ENCODE measurements at regions of chr15 and their contacts with region 1.

Region 1: DNA sequence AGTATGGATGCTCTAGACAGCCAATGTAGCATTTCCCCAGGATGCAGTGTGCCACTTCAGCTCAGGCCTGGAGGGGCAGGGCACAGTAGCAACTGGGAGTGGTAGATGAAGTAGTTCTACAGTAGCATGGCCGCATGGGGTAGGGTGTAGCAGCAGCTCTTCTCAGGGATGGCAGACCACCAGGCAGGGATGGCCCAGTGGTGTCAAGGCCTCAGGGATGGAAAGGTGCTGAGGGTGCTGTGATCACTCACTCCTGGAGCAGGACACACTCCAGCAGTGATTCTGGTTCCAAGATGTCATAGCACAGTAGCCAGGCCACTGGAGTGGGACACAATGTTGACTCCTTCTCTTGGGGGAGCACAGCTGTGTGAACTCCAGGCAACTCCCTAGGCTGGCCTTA is 210.9 kb upstream of the LYSMD4 start:
- DNase-seq: no peak
- H3K4me3 ChIP-seq: no peak overlapping the region
- H3K4me3 Mint-ChIP-seq: no peak overlapping the region
- H3K27ac ChIP-seq: no peak overlapping the region
- H3K27ac Mint-ChIP-seq: no peak overlapping the region
- H3K4me1 ChIP-seq: no peaks in the 10 kb centered on the region
- H3K4me1 Mint-ChIP-seq: no peaks in the 10 kb centered on the region
- H3K27me3 ChIP-seq: no peaks in the 10 kb centered on the region
- H3K27me3 Mint-ChIP-seq: peaks cover 0 to 1% (median 0%) of the 10 kb centered on the region in 3 donors
- CTCF ChIP-seq: no peak

Region 2: GRCh38 chr15:99963096-99963825 is 19.1 kb after region 1 on chr15:
- intact Hi-C with region 1: loop called in 1 of 2 experiments (anchors 2 kb)
- DNase-seq: no peak
- H3K4me3 ChIP-seq: no peak overlapping the region
- H3K4me3 Mint-ChIP-seq: no peak overlapping the region
- H3K27ac ChIP-seq: no peak overlapping the region
- H3K27ac Mint-ChIP-seq: no peak overlapping the region
- H3K4me1 ChIP-seq: no peaks in the 10 kb centered on the region
- H3K4me1 Mint-ChIP-seq: no peaks in the 10 kb centered on the region
- H3K27me3 ChIP-seq: no peaks in the 10 kb centered on the region
- H3K27me3 Mint-ChIP-seq: peaks cover 0 to 5% (median 4%) of the 10 kb centered on the region in 3 donors
- CTCF ChIP-seq: no peak

Region 3: DNA sequence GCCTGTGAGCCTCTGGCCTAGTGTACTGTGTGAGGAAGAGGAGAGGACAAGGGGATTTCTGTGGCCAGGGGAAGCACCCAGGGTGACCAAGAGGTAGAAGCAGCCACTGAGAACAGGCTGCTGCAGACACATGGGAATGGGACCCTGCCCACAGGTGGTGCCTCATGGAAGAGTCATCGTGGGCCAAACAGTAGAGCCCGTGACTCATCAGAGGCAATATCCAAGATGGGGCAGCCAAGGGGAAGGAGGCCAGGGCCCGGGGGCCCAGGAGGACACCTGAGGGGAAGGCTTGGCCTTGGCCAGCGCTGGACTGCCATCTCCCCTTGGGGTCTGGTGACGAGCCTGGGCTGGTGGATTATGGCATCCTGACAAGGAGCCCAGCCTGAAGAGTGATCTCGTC is 64.1 kb after region 1 on chr15:
- intact Hi-C with region 1: loop called in 1 of 2 experiments (anchors 10 kb)
- DNase-seq: no peak
- H3K4me3 ChIP-seq: no peak overlapping the region
- H3K4me3 Mint-ChIP-seq: no peak overlapping the region
- H3K27ac ChIP-seq: no peak overlapping the region
- H3K27ac Mint-ChIP-seq: no peak overlapping the region
- H3K4me1 ChIP-seq: no peaks in the 10 kb centered on the region
- H3K4me1 Mint-ChIP-seq: no peaks in the 10 kb centered on the region
- H3K27me3 ChIP-seq: no peaks in the 10 kb centered on the region
- H3K27me3 Mint-ChIP-seq: peaks cover 0 to 2% (median 0%) of the 10 kb centered on the region in 3 donors
- CTCF ChIP-seq: no peak

Region 4: DNA sequence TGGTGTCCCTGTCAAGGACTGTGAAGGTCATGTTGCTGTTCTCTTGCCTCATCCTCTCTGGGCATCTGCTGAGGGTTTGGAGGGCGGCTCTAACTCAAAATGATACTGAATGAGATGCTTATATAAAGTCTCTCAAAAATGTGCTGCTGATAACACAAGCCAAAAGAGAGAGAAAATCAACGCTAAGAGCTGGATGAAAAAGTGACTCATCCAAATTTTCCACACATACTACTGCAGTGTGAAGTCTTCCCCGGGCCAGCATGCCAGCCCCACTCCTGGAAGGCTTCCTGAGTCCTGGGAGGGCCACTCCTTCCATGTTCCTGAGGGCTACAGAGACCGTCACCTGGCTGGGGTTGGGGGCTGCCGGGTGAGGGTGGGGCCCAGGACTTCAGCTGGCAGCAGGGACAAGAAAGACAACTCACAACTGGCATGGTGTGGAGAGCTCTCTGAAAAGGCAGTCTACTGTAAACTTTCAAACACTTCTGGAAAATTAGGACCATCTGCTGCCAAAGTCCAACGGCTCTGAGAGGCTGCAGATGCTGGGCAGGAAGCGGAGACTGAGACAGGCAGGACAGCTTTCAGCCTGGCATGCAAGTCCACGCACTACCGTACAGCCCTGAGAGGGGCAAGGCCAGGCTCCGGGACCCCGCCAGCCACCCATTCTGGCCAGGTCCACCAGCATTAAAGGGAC is 197.3 kb after region 1 on chr15:
- intact Hi-C with region 1: no loop called
- DNase-seq: no peak
- H3K4me3 ChIP-seq: no peak overlapping the region
- H3K4me3 Mint-ChIP-seq: no peak overlapping the region
- H3K27ac ChIP-seq: no peak overlapping the region
- H3K27ac Mint-ChIP-seq: no peak overlapping the region
- H3K4me1 ChIP-seq: no peaks in the 10 kb centered on the region
- H3K4me1 Mint-ChIP-seq: peaks cover 2% of the 10 kb centered on the region
- H3K27me3 ChIP-seq: no peaks in the 10 kb centered on the region
- H3K27me3 Mint-ChIP-seq: peaks cover under 1 to 2% (median 1%) of the 10 kb centered on the region in 3 donors
- CTCF ChIP-seq: no peak